Tibial artery (tissue), 4 donors: ENCODE measurements at regions of chr5 and their contacts with region 1.

Region 1: DNA sequence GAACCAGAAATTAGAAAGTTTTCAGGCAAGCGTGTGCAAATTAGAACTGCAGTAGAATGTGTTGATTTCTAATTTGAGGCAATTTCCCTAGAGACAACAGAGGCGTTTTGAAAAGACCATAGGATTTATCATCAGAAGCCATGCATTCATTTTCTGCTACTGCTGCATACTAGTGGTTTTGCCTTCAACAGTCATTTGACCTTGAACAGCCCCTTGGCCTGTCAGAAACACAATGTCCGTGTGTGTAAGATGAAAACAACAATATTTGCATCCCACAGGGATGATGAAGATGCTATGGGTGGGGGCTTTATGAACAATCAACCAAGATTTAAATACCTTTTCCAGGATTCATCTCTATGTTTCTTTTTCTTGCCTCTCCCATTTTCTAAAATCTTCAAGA is 73.7 kb downstream of the PDE4D start:
- DNase-seq: no peak
- H3K4me3 ChIP-seq: no peak overlapping the region
- H3K27ac ChIP-seq: no peak overlapping the region
- H3K4me1 ChIP-seq: no peaks in the 10 kb centered on the region
- H3K27me3 ChIP-seq: no peaks in the 10 kb centered on the region
- CTCF ChIP-seq: no peak

Region 2: DNA sequence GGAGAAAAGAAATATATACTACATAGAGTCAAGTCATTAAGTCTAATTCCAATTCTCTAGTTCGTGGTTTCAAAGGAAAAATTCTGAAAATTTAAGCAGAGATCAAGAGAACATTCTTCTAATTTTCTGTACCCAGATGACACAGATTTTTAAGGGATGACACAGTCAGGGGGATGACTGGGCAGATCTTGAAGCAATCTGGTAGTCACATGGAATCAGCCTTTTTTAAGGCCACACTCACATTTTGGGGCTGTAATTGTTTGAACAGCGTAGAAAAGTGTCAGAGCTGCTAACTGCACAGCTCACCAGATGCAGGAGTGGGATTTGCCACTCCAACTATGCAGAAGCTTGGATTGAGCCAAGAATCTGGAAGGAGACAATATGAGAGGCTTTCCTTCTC is 53.3 kb after region 1 on chr5:
- intact Hi-C with region 1: no loop called
- DNase-seq: no peak
- H3K4me3 ChIP-seq: no peak overlapping the region
- H3K27ac ChIP-seq: no peak overlapping the region
- H3K4me1 ChIP-seq: peaks cover 0 to 11% (median 0%) of the 10 kb centered on the region in 4 donors
- H3K27me3 ChIP-seq: no peaks in the 10 kb centered on the region
- CTCF ChIP-seq: no peak

Region 3: DNA sequence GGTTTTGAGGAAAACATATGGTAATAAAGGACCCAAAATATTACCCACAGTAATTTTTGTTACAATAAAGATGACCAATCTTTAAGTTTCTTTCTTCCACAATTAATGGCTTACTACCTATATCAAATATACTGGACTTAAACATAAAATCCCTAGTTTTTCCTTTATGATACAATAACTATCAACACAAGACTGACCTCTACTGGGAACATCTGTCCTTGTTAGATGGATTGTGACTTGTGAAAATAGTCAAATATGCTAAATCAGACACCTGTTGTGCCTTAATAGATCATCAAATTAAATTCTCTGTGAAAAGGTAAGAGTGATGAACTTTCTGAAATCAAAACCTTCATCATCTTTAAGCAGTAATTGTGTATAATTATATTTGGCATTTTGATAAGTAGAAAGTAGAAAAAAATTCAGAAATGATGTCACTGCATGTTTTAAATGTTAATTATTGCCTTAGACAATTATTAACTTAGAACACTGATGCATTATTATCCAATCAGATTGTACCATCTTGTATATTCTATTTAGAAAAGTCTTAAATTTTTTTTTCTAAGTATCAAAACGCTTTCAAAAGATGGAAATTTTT is 766.6 kb after region 1 on chr5:
- intact Hi-C with region 1: loop called (anchors 5 kb)
- DNase-seq: no peak
- H3K4me3 ChIP-seq: no peak overlapping the region
- H3K27ac ChIP-seq: no peak overlapping the region
- H3K4me1 ChIP-seq: peaks cover 0 to 18% (median 0%) of the 10 kb centered on the region in 4 donors
- H3K27me3 ChIP-seq: no peaks in the 10 kb centered on the region
- CTCF ChIP-seq: peak; percentile 53 to 58

Region 4: DNA sequence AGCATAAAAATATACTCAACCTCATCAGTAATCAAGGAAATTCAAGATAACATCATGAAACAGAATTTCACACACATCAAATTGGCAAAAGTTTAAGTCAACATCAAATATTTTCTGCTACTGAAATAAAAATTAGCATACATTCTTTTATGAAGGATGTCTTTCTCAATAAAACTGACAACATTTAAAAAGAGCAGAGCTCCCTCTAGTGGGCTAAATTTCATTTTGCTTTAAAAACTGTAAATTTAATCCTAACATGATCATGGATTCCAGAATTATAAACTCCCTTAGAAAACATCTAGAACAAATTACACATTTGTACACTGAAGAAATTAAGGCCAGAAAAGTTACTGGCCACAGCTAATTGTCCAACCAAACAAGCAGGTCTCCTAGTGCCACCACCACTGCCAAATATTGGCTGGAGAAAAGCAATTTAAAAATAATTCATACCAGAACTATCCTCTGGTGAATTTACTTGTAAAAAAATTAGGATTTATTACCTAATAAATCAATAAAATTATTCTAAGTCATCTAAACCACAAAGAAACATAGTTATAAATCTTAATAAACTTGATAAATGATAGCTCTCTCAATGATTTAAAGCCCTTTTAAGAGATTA is 849.0 kb after region 1 on chr5:
- intact Hi-C with region 1: loop called (anchors 5 kb)
- DNase-seq: no peak
- H3K4me3 ChIP-seq: no peak overlapping the region
- H3K27ac ChIP-seq: no peak overlapping the region
- H3K4me1 ChIP-seq: no peaks in the 10 kb centered on the region
- H3K27me3 ChIP-seq: no peaks in the 10 kb centered on the region
- CTCF ChIP-seq: peak; percentile 63 to 65